CD4-positive, alpha-beta memory T cell (primary cell): ENCODE measurements at regions of chr1 and their contacts with region 1.

Region 1: GRCh38 chr1:83905315-83905907 is 93.5 kb downstream of the TTLL7 start:
- DNase-seq: peak in 4 of 5 donors; percentile 8 to 28 (median 16)
- H3K4me3 ChIP-seq: no peak overlapping the region
- H3K4me3 Mint-ChIP-seq: no peak overlapping the region
- H3K27ac ChIP-seq: no peak overlapping the region
- H3K27ac Mint-ChIP-seq: no peak overlapping the region
- H3K4me1 ChIP-seq: no peaks in the 10 kb centered on the region
- H3K4me1 Mint-ChIP-seq: no peaks in the 10 kb centered on the region
- H3K27me3 ChIP-seq: no peaks in the 10 kb centered on the region
- H3K27me3 Mint-ChIP-seq: peaks cover 12 to 14% of the 10 kb centered on the region in 2 donors

Region 2: GRCh38 chr1:83857103-83857502 is 48.3 kb before region 1 on chr1:
- CTCF ChIA-PET with region 1: no interaction called
- POLR2A ChIA-PET with region 1: no interaction called
- intact Hi-C with region 1: no loop called
- DNase-seq: no peak
- H3K4me3 ChIP-seq: no peak overlapping the region
- H3K4me3 Mint-ChIP-seq: no peak overlapping the region
- H3K27ac ChIP-seq: no peak overlapping the region
- H3K27ac Mint-ChIP-seq: no peak overlapping the region
- H3K4me1 ChIP-seq: peaks cover 6% of the 10 kb centered on the region
- H3K4me1 Mint-ChIP-seq: peaks cover 7 to 14% (median 12%) of the 10 kb centered on the region in 4 donors
- H3K27me3 ChIP-seq: no peaks in the 10 kb centered on the region
- H3K27me3 Mint-ChIP-seq: peaks cover 1 to 5% of the 10 kb centered on the region in 2 donors

Region 3: DNA sequence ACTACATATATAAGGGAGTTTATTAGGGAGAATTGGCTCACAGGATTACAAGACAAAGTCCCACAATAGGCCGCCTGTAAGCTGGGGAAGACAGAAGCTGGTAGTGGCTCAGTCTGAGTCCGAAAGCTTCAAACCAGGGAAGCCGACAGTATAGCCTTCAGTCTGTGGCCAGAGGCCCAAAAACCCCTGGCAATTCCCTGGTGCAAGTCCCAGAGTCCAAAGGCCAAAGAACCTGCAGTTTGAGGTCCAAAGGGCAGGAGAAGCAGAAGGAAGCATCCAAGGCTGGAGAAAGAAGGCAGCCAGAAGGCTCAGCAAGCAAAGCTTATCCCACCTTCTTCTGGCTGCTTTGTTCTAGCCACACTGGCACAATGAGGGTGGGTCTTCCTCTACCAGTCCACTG is 79.6 kb after region 1 on chr1:
- CTCF ChIA-PET with region 1: no interaction called
- POLR2A ChIA-PET with region 1: no interaction called
- intact Hi-C with region 1: no loop called
- DNase-seq: no peak
- H3K4me3 ChIP-seq: no peak overlapping the region
- H3K4me3 Mint-ChIP-seq: no peak overlapping the region
- H3K27ac ChIP-seq: no peak overlapping the region
- H3K27ac Mint-ChIP-seq: no peak overlapping the region
- H3K4me1 ChIP-seq: no peaks in the 10 kb centered on the region
- H3K4me1 Mint-ChIP-seq: no peaks in the 10 kb centered on the region
- H3K27me3 ChIP-seq: no peaks in the 10 kb centered on the region
- H3K27me3 Mint-ChIP-seq: peaks cover 5 to 6% of the 10 kb centered on the region in 2 donors

Region 4: DNA sequence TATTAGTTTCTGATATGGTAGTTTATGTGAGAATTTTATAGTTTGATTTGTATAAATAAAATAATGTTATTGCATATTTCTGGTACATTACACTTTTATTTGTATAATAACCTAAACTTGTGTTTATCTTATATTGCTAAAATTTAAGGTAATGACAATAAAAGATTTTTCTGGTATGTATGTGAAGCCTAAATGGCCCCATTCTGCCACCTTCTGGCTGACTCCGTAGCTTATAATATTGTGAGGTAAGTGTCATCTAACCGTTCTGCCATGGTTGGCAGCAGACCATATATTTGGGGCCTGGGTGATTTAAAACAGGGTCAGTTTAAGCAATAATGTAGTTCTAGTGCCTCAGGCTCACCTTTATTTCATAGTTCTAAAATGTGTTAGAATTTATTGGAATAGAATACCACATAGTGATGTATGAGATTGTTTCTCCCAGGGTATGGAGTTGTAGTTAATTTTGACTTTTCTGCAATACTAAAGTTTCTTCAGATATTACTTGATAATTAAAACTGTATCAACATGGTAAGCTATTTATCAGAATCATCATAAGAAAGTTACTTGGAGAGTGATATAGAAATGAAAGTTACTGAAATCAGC is 217.5 kb after region 1 on chr1:
- CTCF ChIA-PET with region 1: interaction called, 3 read pairs
- POLR2A ChIA-PET with region 1: no interaction called
- intact Hi-C with region 1: loop called (anchors 1 kb)
- DNase-seq: peak; percentile 33 to 47 (median 42)
- H3K4me3 ChIP-seq: no peak overlapping the region
- H3K4me3 Mint-ChIP-seq: no peak overlapping the region
- H3K27ac ChIP-seq: no peak overlapping the region
- H3K27ac Mint-ChIP-seq: no peak overlapping the region
- H3K4me1 ChIP-seq: no peaks in the 10 kb centered on the region
- H3K4me1 Mint-ChIP-seq: no peaks in the 10 kb centered on the region
- H3K27me3 ChIP-seq: no peaks in the 10 kb centered on the region
- H3K27me3 Mint-ChIP-seq: no peaks in the 10 kb centered on the region

Region 5: GRCh38 chr1:84936116-84936810 is 1030.9 kb after region 1 on chr1:
- CTCF ChIA-PET with region 1: interaction called, 5 read pairs
- POLR2A ChIA-PET with region 1: no interaction called
- intact Hi-C with region 1: loop called (anchors 5 kb)
- DNase-seq: peak in 4 of 5 donors; percentile 52 to 62 (median 60)
- H3K4me3 ChIP-seq: no peak overlapping the region
- H3K4me3 Mint-ChIP-seq: no peak overlapping the region
- H3K27ac ChIP-seq: no peak overlapping the region
- H3K27ac Mint-ChIP-seq: no peak overlapping the region
- H3K4me1 ChIP-seq: peaks cover 3% of the 10 kb centered on the region
- H3K4me1 Mint-ChIP-seq: peaks cover 0 to 5% (median 2%) of the 10 kb centered on the region in 4 donors
- H3K27me3 ChIP-seq: no peaks in the 10 kb centered on the region
- H3K27me3 Mint-ChIP-seq: no peaks in the 10 kb centered on the region